ENCODE measurements at regions of chr21 and their contacts with region 1.

Region 1: GRCh38 chr21:14403681-14404318 is 20.9 kb upstream of the HSPA13 start:
- DNase-seq: no peak
- ATAC-seq: no peak
- H3K4me3 Mint-ChIP-seq: no peak overlapping the region
- H3K27ac Mint-ChIP-seq: no peak overlapping the region
- H3K4me1 Mint-ChIP-seq: no peaks in the 10 kb centered on the region
- H3K27me3 Mint-ChIP-seq: no peaks in the 10 kb centered on the region

Region 2: GRCh38 chr21:14773777-14774345 is 370.1 kb after region 1 on chr21:
- CTCF ChIA-PET with region 1: no interaction called
- POLR2A ChIA-PET with region 1: no interaction called
- intact Hi-C with region 1: loop called (anchors 1 kb)
- DNase-seq: peak; percentile 75
- ATAC-seq: no peak
- H3K4me3 Mint-ChIP-seq: no peak overlapping the region
- H3K27ac Mint-ChIP-seq: no peak overlapping the region
- H3K4me1 Mint-ChIP-seq: no peaks in the 10 kb centered on the region
- H3K27me3 Mint-ChIP-seq: no peaks in the 10 kb centered on the region

Region 3: GRCh38 chr21:14864211-14865021 is 460.6 kb after region 1 on chr21:
- CTCF ChIA-PET with region 1: no interaction called
- POLR2A ChIA-PET with region 1: no interaction called
- intact Hi-C with region 1: loop called in 1 of 2 experiments (anchors 1 kb)
- DNase-seq: peak; percentile 77
- ATAC-seq: peak; percentile 88
- H3K4me3 Mint-ChIP-seq: no peak overlapping the region
- H3K27ac Mint-ChIP-seq: no peak overlapping the region
- H3K4me1 Mint-ChIP-seq: peaks cover 6% of the 10 kb centered on the region
- H3K27me3 Mint-ChIP-seq: peaks cover 2% of the 10 kb centered on the region

Region 4: GRCh38 chr21:15592271-15592860 is 1188.6 kb after region 1 on chr21:
- CTCF ChIA-PET with region 1: no interaction called
- POLR2A ChIA-PET with region 1: no interaction called
- intact Hi-C with region 1: loop called in 1 of 2 experiments (anchors 5 kb)
- DNase-seq: no peak
- ATAC-seq: no peak
- H3K4me3 Mint-ChIP-seq: no peak overlapping the region
- H3K27ac Mint-ChIP-seq: no peak overlapping the region
- H3K4me1 Mint-ChIP-seq: no peaks in the 10 kb centered on the region
- H3K27me3 Mint-ChIP-seq: peaks cover 8% of the 10 kb centered on the region

Measured in activated CD4-positive, alpha-beta T cell treated with anti-CD3 and anti-CD28 coated beads for 36 hours (primary cell).